Endothelial cell of umbilical vein (primary cell): ENCODE measurements at regions of chr16 and their contacts with region 1.

Region 1: DNA sequence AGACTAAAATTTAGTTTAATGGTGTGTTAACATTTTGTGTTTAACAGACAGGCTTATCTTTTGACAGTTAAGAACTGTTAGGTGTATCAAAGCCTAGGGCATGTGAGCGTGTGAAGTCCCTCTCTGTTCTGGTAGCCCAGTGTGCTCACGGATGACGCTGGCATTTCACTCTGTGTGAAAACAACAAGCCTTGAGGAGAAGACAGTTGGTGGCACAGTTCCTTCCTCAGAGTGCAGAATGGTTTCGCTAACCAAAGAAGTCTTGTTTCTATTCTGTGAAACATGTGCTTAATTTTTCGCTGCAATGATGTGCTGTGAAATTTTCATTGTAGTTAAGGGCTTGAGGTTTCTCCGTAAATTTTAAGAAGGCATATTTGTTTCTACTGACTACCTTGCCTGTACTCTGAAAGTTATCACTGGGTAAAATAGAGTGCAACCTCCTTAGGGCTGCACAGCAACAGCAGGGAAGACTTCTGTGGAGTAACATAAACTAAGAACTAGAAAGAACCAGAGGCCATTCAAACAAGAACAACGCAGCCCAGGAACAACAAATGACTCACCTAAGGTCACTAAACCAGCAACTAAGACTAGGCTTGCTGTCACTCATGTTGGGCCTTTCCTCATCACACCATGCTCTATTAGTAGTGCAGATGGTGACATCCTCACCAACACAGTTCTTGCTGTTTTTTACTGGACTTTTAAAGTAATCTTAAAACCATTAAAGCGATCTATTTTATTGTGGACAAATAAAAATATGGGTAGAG is 33.4 kb downstream of the BRD7 start:
- DNase-seq: no peak
- H3K4me3 ChIP-seq: no peak overlapping the region
- H3K27ac ChIP-seq: no peak overlapping the region
- H3K4me1 ChIP-seq: no peaks in the 10 kb centered on the region
- H3K27me3 ChIP-seq: no peaks in the 10 kb centered on the region
- CTCF ChIP-seq: no peak
- POLR2A ChIP-seq: no peak

Region 2: GRCh38 chr16:50093607-50094539 is 241.5 kb before region 1 on chr16:
- CTCF ChIA-PET with region 1: no interaction called
- POLR2A ChIA-PET with region 1: no interaction called
- dilution Hi-C with region 1: no loop called
- intact Hi-C with region 1: loop called (anchors 10 kb)
- DNase-seq: peak; percentile 48
- H3K4me3 ChIP-seq: no peak overlapping the region
- H3K27ac ChIP-seq: peak overlapping the region; percentile 55
- H3K4me1 ChIP-seq: peaks cover 2% of the 10 kb centered on the region
- H3K27me3 ChIP-seq: no peaks in the 10 kb centered on the region
- CTCF ChIP-seq: no peak
- POLR2A ChIP-seq: no peak

Region 3: GRCh38 chr16:50265260-50265659 is 70.1 kb before region 1 on chr16:
- CTCF ChIA-PET with region 1: no interaction called
- POLR2A ChIA-PET with region 1: no interaction called
- dilution Hi-C with region 1: no loop called
- intact Hi-C with region 1: no loop called
- DNase-seq: no peak
- H3K4me3 ChIP-seq: no peak overlapping the region
- H3K27ac ChIP-seq: no peak overlapping the region
- H3K4me1 ChIP-seq: peaks cover 14% of the 10 kb centered on the region
- H3K27me3 ChIP-seq: no peaks in the 10 kb centered on the region
- CTCF ChIP-seq: peak in 1 of 2 donors; percentile 18
- POLR2A ChIP-seq: no peak

Region 4: DNA sequence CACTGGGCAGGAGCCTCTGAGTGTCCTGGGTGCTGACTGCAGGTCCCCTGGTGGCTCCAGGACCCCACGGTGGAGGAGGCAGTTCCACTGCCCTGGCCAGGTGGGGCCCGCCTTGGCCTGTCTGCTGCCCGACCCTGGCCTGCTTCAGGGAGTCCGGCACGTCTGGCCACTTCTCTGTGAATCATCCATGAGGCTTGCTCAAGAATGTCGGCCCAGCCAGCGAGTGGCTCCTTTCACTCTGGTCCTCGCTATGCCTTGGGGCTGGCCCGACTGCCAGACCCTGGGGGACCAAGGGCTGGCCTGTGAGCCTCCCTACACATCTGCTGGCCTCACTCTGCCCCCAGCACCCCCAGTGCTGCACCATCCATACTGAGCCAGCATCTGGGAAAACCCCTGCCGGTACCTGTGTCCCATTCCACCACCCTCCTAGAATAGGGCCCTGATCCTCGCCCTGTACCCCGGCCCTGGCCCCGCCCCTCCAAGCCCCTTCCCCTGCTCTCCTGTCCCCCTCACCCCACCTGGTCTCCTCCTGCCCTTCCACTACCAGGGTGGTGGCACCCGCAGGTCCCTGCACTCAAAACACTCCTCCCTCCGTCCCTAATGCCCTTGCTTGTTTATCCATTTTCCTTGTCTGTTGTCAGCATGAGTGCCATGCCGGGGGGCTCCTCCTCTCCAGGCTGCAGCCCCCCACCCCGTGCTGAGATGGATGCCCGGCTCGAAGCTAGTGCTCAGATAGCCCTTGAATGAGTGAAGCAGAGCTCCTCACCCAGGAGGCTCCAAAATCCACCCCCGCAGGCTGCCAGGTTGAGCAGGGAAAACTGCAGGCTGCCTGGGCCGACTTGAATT is 33.5 kb before region 1 on chr16:
- CTCF ChIA-PET with region 1: no interaction called
- POLR2A ChIA-PET with region 1: no interaction called
- dilution Hi-C with region 1: no loop called
- intact Hi-C with region 1: no loop called
- DNase-seq: no peak
- H3K4me3 ChIP-seq: no peak overlapping the region
- H3K27ac ChIP-seq: no peak overlapping the region
- H3K4me1 ChIP-seq: no peaks in the 10 kb centered on the region
- H3K27me3 ChIP-seq: no peaks in the 10 kb centered on the region
- CTCF ChIP-seq: no peak
- POLR2A ChIP-seq: no peak

Region 5: GRCh38 chr16:50313596-50314478 is 21.5 kb before region 1 on chr16:
- CTCF ChIA-PET with region 1: no interaction called
- POLR2A ChIA-PET with region 1: no interaction called
- dilution Hi-C with region 1: no loop called
- intact Hi-C with region 1: no loop called
- DNase-seq: peak; percentile 51
- H3K4me3 ChIP-seq: no peak overlapping the region
- H3K27ac ChIP-seq: peak overlapping the region; percentile 46
- H3K4me1 ChIP-seq: peaks cover 12% of the 10 kb centered on the region
- H3K27me3 ChIP-seq: no peaks in the 10 kb centered on the region
- CTCF ChIP-seq: no peak
- POLR2A ChIP-seq: no peak